ENCODE measurements at regions of chr4 and their contacts with region 1.

Region 1: DNA sequence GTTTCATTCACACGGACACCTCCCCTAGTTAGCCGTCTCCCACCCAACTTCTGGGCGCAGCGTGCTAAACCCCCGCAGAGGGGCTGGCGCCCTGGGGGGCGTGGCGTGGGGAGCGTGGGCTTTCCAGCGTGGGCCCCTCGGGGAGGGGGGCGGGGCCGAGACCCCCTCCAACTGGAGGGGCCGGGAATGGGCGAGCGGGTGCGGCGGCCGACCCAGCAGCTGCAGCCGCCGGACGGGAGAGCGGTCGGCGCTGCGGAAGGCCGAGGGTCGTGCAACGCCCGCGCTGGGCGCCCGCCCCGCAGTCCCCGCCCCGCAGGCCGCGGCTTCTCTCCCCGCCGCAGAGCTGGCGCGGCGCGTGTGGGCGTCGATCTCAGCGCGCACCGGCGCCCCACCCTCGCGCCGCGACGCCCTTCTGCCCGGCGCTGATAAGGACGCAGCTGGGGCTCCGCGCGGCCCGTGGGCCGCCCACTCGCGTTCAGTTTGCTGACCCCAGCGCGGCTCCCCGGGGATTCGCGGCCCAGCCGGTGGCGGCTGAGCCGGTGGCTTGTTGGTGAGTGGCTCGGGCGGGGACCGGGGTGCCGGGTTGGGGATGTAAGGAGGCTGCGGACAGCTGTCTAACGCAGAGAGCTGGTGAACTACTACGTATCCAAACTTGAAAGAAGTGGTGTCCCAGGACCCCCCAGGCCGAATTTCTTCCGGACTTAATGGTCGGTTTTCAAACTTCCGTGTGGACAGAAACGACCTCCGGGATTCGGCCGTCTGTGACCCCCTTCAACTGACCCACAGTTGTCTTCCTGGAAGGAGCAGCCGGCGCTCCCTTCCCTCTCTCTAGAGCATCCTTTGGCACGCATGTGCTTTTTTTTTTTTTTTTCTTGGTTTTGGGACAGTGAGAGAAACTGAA is 1.5 kb downstream of the FHDC1 start:
- DNase-seq: peak in 1 of 2 experiments; percentile 28
- H3K4me3 ChIP-seq: peak overlapping the region; percentile 60
- H3K4me3 Mint-ChIP-seq: peak overlapping the region; percentile 80
- H3K27ac Mint-ChIP-seq: no peak overlapping the region
- H3K4me1 ChIP-seq: no peaks in the 10 kb centered on the region
- H3K4me1 Mint-ChIP-seq: peaks cover 7% of the 10 kb centered on the region
- H3K27me3 ChIP-seq: no peaks in the 10 kb centered on the region; the same call in 1 of the 2 replicates
- H3K27me3 Mint-ChIP-seq: peaks cover 4% of the 10 kb centered on the region
- CTCF ChIP-seq: no peak

Region 2: DNA sequence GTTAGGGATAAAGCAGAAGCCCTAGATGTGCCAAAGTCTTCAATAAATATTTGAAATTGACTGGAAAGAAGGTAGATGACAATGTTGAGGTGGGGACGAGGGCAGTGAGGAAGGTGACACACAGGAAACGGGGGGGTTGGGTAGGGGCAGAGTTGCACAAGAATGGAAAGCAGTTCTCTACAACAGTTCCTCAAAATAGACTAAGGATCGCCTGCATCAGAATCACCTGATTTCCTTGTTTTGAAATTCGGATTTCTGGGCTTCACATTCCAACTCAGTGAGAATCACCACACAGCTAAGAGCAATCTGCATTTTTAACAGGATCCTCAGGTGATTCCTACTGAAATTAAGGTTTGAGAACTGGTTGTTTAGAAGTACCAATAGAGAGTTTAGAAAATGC is 87.2 kb before region 1 on chr4:
- CTCF ChIA-PET with region 1: no interaction called
- POLR2A ChIA-PET with region 1: no interaction called
- intact Hi-C with region 1: loop called (anchors 1 kb)
- DNase-seq: no peak
- H3K4me3 ChIP-seq: no peak overlapping the region
- H3K4me3 Mint-ChIP-seq: no peak overlapping the region
- H3K27ac Mint-ChIP-seq: no peak overlapping the region
- H3K4me1 ChIP-seq: no peaks in the 10 kb centered on the region
- H3K4me1 Mint-ChIP-seq: no peaks in the 10 kb centered on the region
- H3K27me3 ChIP-seq: no peaks in the 10 kb centered on the region
- H3K27me3 Mint-ChIP-seq: no peaks in the 10 kb centered on the region
- CTCF ChIP-seq: no peak

Region 3: GRCh38 chr4:152996108-152996571 is 58.6 kb after region 1 on chr4:
- CTCF ChIA-PET with region 1: no interaction called
- POLR2A ChIA-PET with region 1: no interaction called
- intact Hi-C with region 1: loop called (anchors 5 kb)
- DNase-seq: peak in 1 of 2 experiments; percentile 10
- H3K4me3 ChIP-seq: no peak overlapping the region
- H3K4me3 Mint-ChIP-seq: peak overlapping the region; percentile 31
- H3K27ac Mint-ChIP-seq: peak overlapping the region; percentile 21
- H3K4me1 ChIP-seq: no peaks in the 10 kb centered on the region; the same call in 1 of the 2 replicates
- H3K4me1 Mint-ChIP-seq: peaks cover 7% of the 10 kb centered on the region
- H3K27me3 ChIP-seq: no peaks in the 10 kb centered on the region
- H3K27me3 Mint-ChIP-seq: no peaks in the 10 kb centered on the region
- CTCF ChIP-seq: no peak

Region 4: GRCh38 chr4:153067380-153067779 is 129.8 kb after region 1 on chr4:
- CTCF ChIA-PET with region 1: no interaction called
- POLR2A ChIA-PET with region 1: no interaction called
- intact Hi-C with region 1: loop called (anchors 5 kb)
- DNase-seq: peak; percentile 73 to 74
- H3K4me3 ChIP-seq: no peak overlapping the region
- H3K4me3 Mint-ChIP-seq: no peak overlapping the region
- H3K27ac Mint-ChIP-seq: peak overlapping the region; percentile 88
- H3K4me1 ChIP-seq: peaks cover 38% of the 10 kb centered on the region
- H3K4me1 Mint-ChIP-seq: peaks cover 20% of the 10 kb centered on the region
- H3K27me3 ChIP-seq: no peaks in the 10 kb centered on the region
- H3K27me3 Mint-ChIP-seq: no peaks in the 10 kb centered on the region
- CTCF ChIP-seq: no peak

Region 5: DNA sequence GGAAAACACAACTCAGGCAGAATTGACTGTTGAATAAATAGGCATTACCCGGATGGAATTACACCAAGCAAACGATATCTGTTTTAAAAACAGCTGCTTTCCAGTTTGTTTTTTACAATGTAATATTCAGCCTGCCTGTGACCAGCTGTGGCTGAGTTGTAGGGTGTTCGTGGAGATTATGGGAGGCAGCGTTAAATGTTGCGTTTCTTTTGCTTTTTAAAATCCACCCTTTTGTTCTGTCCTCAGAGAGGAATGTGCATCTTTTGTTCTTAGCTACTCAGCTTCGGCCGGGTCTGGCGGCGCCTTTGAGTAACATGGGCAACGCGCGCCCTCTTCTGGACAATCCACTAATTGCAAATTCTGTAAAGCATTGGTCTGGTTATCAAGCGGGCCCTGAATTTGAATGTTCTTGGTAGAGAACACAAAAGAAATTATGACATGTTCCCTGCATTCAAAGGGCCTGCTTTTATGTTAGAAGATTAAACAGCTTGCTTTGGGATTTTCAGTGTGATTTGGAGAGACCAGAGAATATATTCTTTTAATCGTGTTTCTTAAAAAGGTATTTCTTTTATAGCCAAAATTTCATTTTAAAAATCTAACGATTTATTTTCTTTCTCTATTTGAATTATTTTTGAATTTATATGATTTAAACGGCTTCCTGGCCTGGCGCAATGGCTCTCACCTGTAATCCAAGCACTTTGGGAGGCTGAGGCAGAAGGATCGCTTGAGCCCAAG is 190.3 kb after region 1 on chr4:
- CTCF ChIA-PET with region 1: interaction called, 9 read pairs
- POLR2A ChIA-PET with region 1: interaction called, 3 read pairs
- intact Hi-C with region 1: loop called (anchors 1 kb)
- DNase-seq: peak; percentile 77 to 86
- H3K4me3 ChIP-seq: no peak overlapping the region
- H3K4me3 Mint-ChIP-seq: peak overlapping the region; percentile 49
- H3K27ac Mint-ChIP-seq: no peak overlapping the region
- H3K4me1 ChIP-seq: peaks cover 15% of the 10 kb centered on the region
- H3K4me1 Mint-ChIP-seq: peaks cover 7% of the 10 kb centered on the region
- H3K27me3 ChIP-seq: no peaks in the 10 kb centered on the region
- H3K27me3 Mint-ChIP-seq: no peaks in the 10 kb centered on the region
- CTCF ChIP-seq: peak; percentile 74 to 82

Measured in Caco-2 (cell line).